Aorta (tissue), 5 donors: ENCODE measurements at regions of chr22 and their contacts with region 1.

Region 1: DNA sequence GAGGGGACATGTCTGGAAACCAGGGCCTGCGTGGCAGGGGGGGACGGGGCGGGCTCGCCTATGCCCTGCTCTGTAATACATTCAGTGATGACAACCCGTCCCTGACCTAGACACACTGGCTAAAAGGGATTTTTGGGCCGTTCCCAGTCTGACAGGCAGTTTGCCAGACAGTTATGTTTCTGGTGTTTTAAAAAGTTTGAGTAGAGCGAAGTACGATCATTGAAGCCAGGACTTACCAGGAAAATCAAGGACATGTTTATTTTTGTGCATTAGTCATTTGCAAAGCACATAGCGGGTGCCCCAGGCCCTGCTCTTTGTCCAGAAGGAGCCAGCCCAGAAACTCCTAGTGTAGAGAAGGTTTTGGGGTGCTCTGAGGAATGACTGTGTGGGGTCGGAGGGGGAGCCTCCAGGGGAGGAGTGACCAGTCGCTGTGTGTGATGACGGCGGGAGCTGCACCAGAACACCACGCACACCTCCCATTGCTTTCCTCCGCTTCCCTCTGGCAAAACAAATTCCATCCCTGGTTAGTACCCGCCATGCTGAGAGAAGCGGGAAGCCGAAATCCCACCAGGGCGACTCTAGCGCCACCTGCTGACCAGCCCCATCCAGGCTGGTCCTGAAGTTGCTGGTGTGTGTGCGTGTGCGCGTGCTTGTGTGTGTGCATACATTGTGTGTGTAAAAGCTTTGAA is 50.8 kb downstream of the FBLN1 start:
- DNase-seq: peak; percentile 87 to 96
- ATAC-seq: peak; percentile 83
- H3K4me3 ChIP-seq: no peak overlapping the region
- H3K27ac ChIP-seq: peak overlapping the region; percentile 80 to 99
- H3K4me1 ChIP-seq: peaks cover 0 to 3% of the 10 kb centered on the region in 2 donors
- H3K27me3 ChIP-seq: no peaks in the 10 kb centered on the region

Region 2: GRCh38 chr22:45268958-45269844 is 284.3 kb before region 1 on chr22:
- intact Hi-C with region 1: loop called (anchors 1 to 2 kb)
- DNase-seq: peak; percentile 89 to 96
- ATAC-seq: peak; percentile 94
- H3K4me3 ChIP-seq: peak overlapping the region; percentile 57 to 89
- H3K27ac ChIP-seq: peak overlapping the region in 1 of 2 donors; percentile 39
- H3K4me1 ChIP-seq: no peaks in the 10 kb centered on the region
- H3K27me3 ChIP-seq: no peaks in the 10 kb centered on the region

Region 3: DNA sequence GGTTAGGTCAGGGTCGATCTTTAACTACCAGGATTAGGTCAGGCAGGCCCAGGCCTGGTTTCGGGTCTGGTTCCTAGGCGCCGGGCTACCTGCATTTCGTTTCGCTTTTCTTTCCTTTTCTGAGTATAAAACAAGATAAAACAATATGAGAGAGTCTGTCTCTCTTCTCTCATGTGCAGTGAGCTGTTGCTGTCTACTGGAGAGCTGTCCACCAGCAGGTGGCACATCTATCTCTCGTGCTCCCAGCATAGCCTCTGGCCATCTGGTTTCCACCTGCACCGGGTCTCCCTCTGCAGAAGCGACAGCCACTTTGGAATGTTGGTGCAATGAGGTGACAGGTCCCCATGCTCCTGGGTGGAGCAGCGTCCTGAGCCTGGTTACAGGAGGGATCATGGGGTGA is 112.4 kb before region 1 on chr22:
- intact Hi-C with region 1: loop called (anchors 1 to 2 kb)
- DNase-seq: peak in 1 of 2 donors; percentile 73
- ATAC-seq: peak; percentile 83
- H3K4me3 ChIP-seq: no peak overlapping the region
- H3K27ac ChIP-seq: no peak overlapping the region
- H3K4me1 ChIP-seq: no peaks in the 10 kb centered on the region
- H3K27me3 ChIP-seq: no peaks in the 10 kb centered on the region

Region 4: GRCh38 chr22:45478108-45478771 is 75.3 kb before region 1 on chr22:
- intact Hi-C with region 1: no loop called
- DNase-seq: no peak
- ATAC-seq: peak; percentile 79
- H3K4me3 ChIP-seq: no peak overlapping the region
- H3K27ac ChIP-seq: peak overlapping the region in 1 of 2 donors; percentile 46
- H3K4me1 ChIP-seq: no peaks in the 10 kb centered on the region
- H3K27me3 ChIP-seq: no peaks in the 10 kb centered on the region

Region 5: GRCh38 chr22:45502215-45503049 is 51.1 kb before region 1 on chr22 and contains the start of gene FBLN1:
- intact Hi-C with region 1: loop called (anchors 5 kb)
- DNase-seq: peak; percentile 65 to 87
- ATAC-seq: peak; percentile 75
- H3K4me3 ChIP-seq: peak within 1 kb of the TSS; percentile 46 to 75
- H3K27ac ChIP-seq: no peak within 1 kb of the TSS
- H3K4me1 ChIP-seq: no peaks in the 10 kb centered on the region
- H3K27me3 ChIP-seq: no peaks in the 10 kb centered on the region
- total RNA-seq, gene FBLN1: 500 to 1,512 TPM

Region 6: GRCh38 chr22:45602824-45603630 is 49.5 kb after region 1 on chr22:
- intact Hi-C with region 1: no loop called
- DNase-seq: no peak
- ATAC-seq: peak; percentile 34
- H3K4me3 ChIP-seq: no peak overlapping the region
- H3K27ac ChIP-seq: no peak overlapping the region
- H3K4me1 ChIP-seq: no peaks in the 10 kb centered on the region
- H3K27me3 ChIP-seq: no peaks in the 10 kb centered on the region